ENCODE measurements at regions of chr13 and their contacts with region 1.

Region 1: DNA sequence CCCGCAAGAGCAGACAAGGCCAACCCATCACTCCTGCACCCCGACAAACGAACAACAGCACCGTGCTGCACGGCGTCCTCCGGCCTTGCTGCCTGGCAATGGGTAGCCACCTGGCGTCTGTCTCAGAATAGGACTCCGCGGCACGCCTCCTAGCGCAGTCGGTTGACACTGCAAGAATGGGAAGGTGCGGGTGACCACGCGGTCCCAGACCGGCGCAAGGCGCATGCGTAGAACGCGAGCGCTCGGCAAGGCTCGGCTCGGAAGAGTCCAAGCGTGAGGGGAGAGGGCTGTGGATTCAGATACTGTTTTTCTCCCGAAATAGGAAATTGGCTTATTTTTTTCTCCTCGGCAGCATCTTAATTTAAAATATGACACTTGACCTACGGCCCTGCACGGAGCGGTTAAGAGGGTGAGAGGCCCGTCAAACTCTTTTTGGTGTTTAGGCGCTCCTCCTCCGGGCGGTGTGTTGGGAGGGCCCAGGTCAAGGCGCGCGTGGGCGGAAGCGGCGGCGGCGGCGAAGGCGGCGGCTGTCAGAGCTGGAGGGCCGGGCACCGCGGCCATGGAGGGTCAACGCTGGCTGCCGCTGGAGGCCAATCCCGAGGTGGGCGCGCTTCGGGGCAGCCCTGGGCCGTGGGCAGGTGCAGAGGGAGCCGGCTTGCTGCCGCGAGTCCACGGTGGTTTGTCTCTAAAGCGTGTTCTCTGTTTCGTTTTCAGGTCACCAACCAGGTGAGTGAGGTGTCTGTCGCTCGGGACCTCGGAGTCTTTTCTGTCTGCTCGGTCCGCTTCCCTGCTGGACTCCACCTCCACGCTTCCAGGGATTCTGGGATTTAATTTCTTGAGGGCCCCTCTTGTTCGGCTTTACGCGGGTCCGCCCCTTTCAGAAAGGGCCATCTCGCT is at the start of gene UCHL3:
- DNase-seq: peak; percentile 98
- H3K4me3 Mint-ChIP-seq: peak within 1 kb of the TSS; percentile 97
- H3K27ac Mint-ChIP-seq: peak within 1 kb of the TSS; percentile 95
- H3K4me1 Mint-ChIP-seq: peaks cover 35% of the 10 kb centered on the region
- H3K27me3 Mint-ChIP-seq: no peaks in the 10 kb centered on the region
- total RNA-seq, gene UCHL3: 39.1 to 42.6 TPM

Region 2: DNA sequence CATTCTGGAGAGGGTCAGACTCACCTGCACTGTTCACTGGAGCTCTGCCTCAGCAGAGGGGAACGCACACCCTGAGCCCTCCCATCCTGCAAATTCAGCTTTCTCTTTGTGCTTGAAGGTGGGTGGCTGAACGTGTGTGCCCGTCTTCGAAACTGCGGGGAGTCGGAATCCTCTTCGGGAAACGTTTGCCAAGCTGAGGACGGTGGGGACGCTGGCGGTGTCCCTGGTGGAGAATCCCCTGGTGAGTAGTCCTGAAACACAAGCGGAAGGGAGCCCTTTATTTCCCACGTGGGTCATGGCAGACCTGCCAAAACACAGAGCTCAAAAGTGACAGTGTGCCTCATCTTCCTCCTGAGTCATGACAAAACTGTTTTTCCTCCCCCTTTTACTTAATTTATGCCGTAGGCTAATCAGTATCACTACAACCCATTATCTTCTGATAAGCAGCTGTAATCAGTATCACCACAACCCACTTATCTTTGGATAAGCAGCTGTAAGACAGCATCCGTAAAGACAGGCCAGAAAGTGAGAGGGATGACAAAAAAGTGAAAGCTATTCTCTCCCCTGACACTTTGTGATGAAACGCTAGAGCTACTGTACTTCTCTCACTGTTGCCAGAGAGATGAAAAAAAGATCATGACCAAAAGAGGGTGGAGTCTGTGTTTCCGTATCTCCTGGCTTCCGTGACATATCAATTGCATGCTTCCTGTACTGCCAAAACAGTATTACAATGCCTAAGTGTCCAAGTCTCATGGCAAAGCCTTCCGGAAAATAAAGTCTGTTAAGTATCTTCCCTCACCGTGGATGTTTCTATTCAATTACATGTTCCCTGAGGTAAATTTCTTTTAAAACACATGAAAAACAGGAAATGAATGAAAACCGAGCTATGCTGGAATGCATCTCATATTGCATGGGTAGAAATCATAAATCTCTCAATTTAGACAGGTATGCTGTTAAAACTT is 223.1 kb before region 1 on chr13:
- CTCF ChIA-PET with region 1: interaction called, 3 read pairs
- POLR2A ChIA-PET with region 1: interaction called, 3 read pairs
- intact Hi-C with region 1: loop called (anchors 2 kb)
- DNase-seq: peak; percentile 78
- H3K4me3 Mint-ChIP-seq: peak overlapping the region; percentile 89
- H3K27ac Mint-ChIP-seq: peak overlapping the region; percentile 95
- H3K4me1 Mint-ChIP-seq: peaks cover 35% of the 10 kb centered on the region
- H3K27me3 Mint-ChIP-seq: no peaks in the 10 kb centered on the region

Region 3: DNA sequence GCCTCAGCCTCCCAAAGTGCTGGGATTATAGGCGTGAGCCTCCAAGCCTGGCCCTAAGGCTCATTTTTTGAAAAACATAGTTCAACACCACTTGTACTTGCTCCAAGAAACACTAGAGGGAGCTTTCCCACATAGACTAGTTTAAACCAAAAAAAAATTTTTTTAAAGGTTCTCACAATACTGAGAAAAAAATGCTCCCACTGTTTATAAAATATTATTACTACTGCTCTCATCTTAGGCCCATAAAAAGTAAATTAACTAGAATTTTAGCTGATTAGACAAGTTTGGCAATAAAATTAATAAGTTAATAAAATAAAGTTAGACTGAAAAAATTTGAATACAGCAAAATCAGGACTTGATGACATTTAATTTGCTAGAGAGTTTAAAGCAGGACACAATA is 177.0 kb before region 1 on chr13:
- CTCF ChIA-PET with region 1: interaction called, 10 read pairs
- POLR2A ChIA-PET with region 1: no interaction called
- intact Hi-C with region 1: loop called (anchors 1 kb)
- DNase-seq: no peak
- H3K4me3 Mint-ChIP-seq: no peak overlapping the region
- H3K27ac Mint-ChIP-seq: no peak overlapping the region
- H3K4me1 Mint-ChIP-seq: peaks cover 3% of the 10 kb centered on the region
- H3K27me3 Mint-ChIP-seq: peaks cover 1% of the 10 kb centered on the region

Region 4: GRCh38 chr13:75395066-75395465 is 154.4 kb before region 1 on chr13:
- CTCF ChIA-PET with region 1: no interaction called
- POLR2A ChIA-PET with region 1: no interaction called
- intact Hi-C with region 1: no loop called
- DNase-seq: no peak
- H3K4me3 Mint-ChIP-seq: no peak overlapping the region
- H3K27ac Mint-ChIP-seq: no peak overlapping the region
- H3K4me1 Mint-ChIP-seq: no peaks in the 10 kb centered on the region
- H3K27me3 Mint-ChIP-seq: no peaks in the 10 kb centered on the region

Region 5: DNA sequence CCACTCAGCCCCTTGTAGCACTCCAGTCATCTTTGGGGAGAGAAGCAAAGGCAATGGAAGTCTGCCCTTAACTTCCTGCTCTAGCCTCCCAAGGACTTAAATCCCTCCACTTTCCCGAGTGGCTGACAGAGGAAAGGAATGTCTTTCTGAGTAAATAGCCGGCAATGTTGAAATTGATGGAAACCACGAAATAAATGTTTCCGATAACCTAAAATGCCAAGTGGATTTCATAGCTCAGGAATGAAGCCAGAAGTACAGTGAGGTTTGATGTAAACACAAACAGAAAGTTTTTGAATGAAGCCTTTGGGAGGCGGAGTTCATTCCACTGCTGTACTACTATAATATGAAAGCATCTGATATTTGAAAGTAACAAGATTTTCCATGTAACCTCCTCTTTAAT is 53.6 kb before region 1 on chr13:
- CTCF ChIA-PET with region 1: no interaction called
- POLR2A ChIA-PET with region 1: no interaction called
- intact Hi-C with region 1: no loop called
- DNase-seq: no peak
- H3K4me3 Mint-ChIP-seq: no peak overlapping the region
- H3K27ac Mint-ChIP-seq: no peak overlapping the region
- H3K4me1 Mint-ChIP-seq: no peaks in the 10 kb centered on the region
- H3K27me3 Mint-ChIP-seq: peaks cover 4% of the 10 kb centered on the region

Region 6: GRCh38 chr13:75537401-75538365 is 11.8 kb before region 1 on chr13 and contains the start of gene COMMD6:
- CTCF ChIA-PET with region 1: interaction called, 3 read pairs
- POLR2A ChIA-PET with region 1: no interaction called
- intact Hi-C with region 1: loop called (anchors 1 kb)
- DNase-seq: peak; percentile 80
- H3K4me3 Mint-ChIP-seq: peak within 1 kb of the TSS; percentile 98
- H3K27ac Mint-ChIP-seq: peak within 1 kb of the TSS; percentile 85
- H3K4me1 Mint-ChIP-seq: peaks cover 22% of the 10 kb centered on the region
- H3K27me3 Mint-ChIP-seq: no peaks in the 10 kb centered on the region
- total RNA-seq, gene COMMD6: 130 to 136 TPM